HCT116 (cell line): ENCODE measurements at regions of chr20 and their contacts with region 1.

Region 1: DNA sequence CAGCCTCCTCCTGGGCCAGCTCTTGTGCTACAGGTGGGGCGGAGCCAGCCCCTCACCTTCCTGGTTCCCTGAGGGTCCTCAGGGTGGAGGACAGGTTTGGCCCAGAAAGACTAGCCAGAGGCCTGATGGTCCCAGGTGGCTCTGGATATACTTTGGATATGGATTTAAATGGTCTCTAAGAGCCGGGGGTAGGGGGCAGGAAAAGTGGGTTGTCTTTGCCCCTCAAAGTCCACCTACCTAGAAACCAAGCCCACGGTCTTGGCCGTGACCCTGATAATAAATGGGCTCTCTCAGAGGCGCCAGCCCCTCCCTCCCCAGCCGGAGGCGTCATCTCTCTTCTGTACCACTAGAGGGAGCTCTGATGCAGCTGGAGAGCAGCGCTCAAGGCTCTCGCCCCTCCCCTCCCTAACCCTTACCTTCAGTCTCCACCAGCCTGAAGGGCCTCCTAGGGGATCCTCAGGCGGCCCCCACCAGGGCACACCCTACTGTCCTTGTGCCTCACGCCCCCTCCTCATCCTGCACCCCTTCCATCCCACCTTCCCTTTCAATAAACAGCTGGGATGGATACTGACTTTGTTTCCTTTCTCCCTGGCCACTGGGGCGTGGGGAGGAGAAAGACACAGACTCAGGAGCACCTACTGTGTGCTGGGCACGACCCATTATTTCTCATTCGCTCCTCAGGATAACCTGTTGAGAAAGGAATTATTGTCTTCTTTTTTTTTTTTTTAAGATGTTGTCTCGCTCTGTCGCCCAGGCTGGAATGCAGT is 7.6 kb downstream of the NRSN2 start:
- DNase-seq: peak; percentile 59
- ATAC-seq: peak; percentile 99
- H3K4me3 ChIP-seq: no peak overlapping the region
- H3K27ac ChIP-seq: no peak overlapping the region
- H3K4me1 ChIP-seq: peaks cover 0 to 8% of the 10 kb centered on the region in 2 experiments; a peak in 3 of 4 replicates
- H3K27me3 ChIP-seq: no peaks in the 10 kb centered on the region
- CTCF ChIP-seq: peak; percentile 90 to 94 (median 91)
- POLR2A ChIP-seq: no peak
- RAD21 ChIP-seq: peak; percentile 99

Region 2: DNA sequence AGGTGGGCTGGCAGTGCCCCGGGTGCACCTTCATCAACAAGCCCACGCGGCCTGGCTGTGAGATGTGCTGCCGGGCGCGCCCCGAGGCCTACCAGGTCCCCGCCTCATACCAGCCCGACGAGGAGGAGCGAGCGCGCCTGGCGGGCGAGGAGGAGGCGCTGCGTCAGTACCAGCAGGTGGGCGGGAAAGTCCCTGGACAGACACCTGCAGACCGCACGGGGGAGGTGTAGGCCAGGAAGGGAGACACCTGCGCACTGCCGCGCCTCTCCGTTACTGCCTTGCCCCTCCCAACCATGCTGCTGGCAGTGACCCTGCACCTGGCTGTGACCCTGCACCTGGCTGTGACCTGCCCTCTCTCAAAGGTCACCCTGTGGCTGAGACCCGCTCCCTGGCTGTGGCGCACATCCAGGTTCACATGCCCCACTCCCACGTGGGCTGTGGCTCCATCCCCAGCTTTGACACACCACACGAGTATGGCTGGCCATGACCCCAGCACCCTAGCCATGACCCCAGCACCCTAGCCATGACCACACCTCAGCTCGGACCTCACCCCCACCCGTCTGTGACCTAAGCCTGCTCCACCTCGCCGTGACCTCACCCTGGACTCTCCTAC is 65.2 kb after region 1 on chr20:
- CTCF ChIA-PET with region 1: no interaction called
- POLR2A ChIA-PET with region 1: no interaction called
- RAD21 ChIA-PET with region 1: no interaction called
- intact Hi-C with region 1: loop called (anchors 5 kb)
- DNase-seq: peak; percentile 76
- ATAC-seq: peak; percentile 97
- H3K4me3 ChIP-seq: peak overlapping the region in 1 of 2 experiments; percentile 13; a peak in 1 of 4 replicates
- H3K27ac ChIP-seq: peak overlapping the region; percentile 66
- H3K4me1 ChIP-seq: peaks cover 13 to 36% of the 10 kb centered on the region in 2 experiments
- H3K27me3 ChIP-seq: no peaks in the 10 kb centered on the region
- CTCF ChIP-seq: peak; percentile 18 to 56 (median 48); a peak in 5 of 6 replicates
- POLR2A ChIP-seq: no peak
- RAD21 ChIP-seq: peak; percentile 50

Region 3: DNA sequence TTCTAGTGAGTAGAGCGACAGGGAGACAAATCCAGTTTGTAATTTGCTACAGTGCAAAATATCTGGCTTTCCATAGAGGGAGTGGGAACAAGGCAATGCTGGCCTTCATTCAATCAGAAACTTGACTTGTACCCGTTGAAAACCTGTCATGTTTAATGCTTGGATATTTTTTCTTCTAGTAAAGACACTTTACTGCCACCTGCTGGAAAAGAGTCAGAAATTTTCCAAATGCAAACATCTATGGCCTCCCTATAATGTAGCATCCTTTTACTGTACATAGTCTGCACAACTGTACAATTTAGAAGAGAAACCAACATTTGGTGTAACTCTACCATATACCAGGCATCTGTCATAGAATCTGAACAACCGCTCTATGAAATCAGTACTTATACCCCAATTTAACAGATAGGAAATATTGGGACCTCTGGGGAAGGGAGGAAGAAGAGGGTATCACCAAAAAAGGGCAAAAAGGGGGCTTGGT is 124.5 kb after region 1 on chr20:
- CTCF ChIA-PET with region 1: interaction called, 14 read pairs
- POLR2A ChIA-PET with region 1: no interaction called
- RAD21 ChIA-PET with region 1: no interaction called
- intact Hi-C with region 1: loop called (anchors 1 kb)
- DNase-seq: peak; percentile 41
- ATAC-seq: peak; percentile 71
- H3K4me3 ChIP-seq: no peak overlapping the region
- H3K27ac ChIP-seq: no peak overlapping the region
- H3K4me1 ChIP-seq: no peaks in the 10 kb centered on the region
- H3K27me3 ChIP-seq: no peaks in the 10 kb centered on the region
- CTCF ChIP-seq: peak; percentile 46 to 61 (median 54); a peak in 5 of 6 replicates
- POLR2A ChIP-seq: no peak
- RAD21 ChIP-seq: peak; percentile 66

Region 4: GRCh38 chr20:667391-667964 is 313.0 kb after region 1 on chr20:
- CTCF ChIA-PET with region 1: interaction called, 6 read pairs
- POLR2A ChIA-PET with region 1: no interaction called
- RAD21 ChIA-PET with region 1: no interaction called
- intact Hi-C with region 1: loop called (anchors 5 kb)
- DNase-seq: no peak
- ATAC-seq: peak; percentile 87
- H3K4me3 ChIP-seq: no peak overlapping the region
- H3K27ac ChIP-seq: no peak overlapping the region
- H3K4me1 ChIP-seq: peaks cover 9 to 10% of the 10 kb centered on the region in 2 experiments; a peak in 3 of 4 replicates
- H3K27me3 ChIP-seq: no peaks in the 10 kb centered on the region
- CTCF ChIP-seq: peak; percentile 89 to 99 (median 97)
- POLR2A ChIP-seq: no peak
- RAD21 ChIP-seq: peak; percentile 68